OCI-LY7 (cell line): ENCODE measurements at regions of chr14 and their contacts with region 1.

Region 1: GRCh38 chr14:60276342-60276741 is 27.3 kb downstream of the PPM1A start:
- DNase-seq: no peak
- H3K4me3 ChIP-seq: no peak overlapping the region
- H3K27ac ChIP-seq: no peak overlapping the region
- H3K4me1 ChIP-seq: peaks cover 24% of the 10 kb centered on the region
- CTCF ChIP-seq: no peak

Region 2: DNA sequence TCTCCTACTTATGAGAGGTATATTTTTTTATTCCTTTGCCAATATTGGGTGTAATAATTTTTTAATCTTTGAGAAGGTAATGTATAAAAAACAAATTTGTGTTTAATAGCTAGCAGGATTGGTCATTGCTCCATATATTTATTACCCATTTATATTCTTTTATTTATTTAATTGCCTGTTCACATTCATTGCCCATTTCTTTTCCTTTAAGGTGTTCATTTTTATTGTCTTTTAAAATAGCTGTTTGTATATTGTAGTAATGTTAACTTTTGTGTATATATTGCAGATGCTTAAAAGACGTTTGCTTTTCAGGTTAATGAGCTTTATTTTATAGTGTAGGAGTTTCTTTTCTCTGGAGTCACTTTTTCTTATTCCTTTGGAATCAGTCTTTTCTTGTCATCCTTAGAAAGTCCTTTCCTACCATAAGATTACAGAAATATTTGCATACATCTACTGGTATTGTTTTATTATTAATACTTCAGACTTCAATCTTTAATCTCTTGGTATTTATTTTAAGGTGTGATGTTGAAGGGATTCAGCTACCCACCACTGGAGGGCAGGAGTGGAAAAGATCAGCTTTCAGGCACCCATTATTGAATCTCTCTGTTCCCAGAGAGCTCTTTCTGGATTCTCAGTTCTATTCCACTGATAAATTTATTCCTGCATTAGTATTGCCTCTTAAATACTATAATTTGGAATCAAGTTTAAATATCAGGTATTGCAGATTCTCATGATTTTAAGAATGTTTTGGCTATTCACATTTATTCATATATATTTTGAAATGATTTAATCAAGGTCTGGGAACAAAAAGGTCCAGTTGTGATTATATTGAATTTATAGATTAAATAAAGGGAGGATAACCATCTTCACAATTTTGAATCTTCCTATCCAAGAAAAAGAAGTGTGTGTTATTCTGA is 10.1 kb before region 1 on chr14:
- CTCF ChIA-PET with region 1: no interaction called
- POLR2A ChIA-PET with region 1: interaction called, 10 read pairs
- intact Hi-C with region 1: no loop called
- DNase-seq: peak; percentile 48
- H3K4me3 ChIP-seq: no peak overlapping the region
- H3K27ac ChIP-seq: no peak overlapping the region
- H3K4me1 ChIP-seq: no peaks in the 10 kb centered on the region
- CTCF ChIP-seq: peak; percentile 92

Region 3: GRCh38 chr14:60294411-60295069 is 18.2 kb after region 1 on chr14:
- CTCF ChIA-PET with region 1: no interaction called
- POLR2A ChIA-PET with region 1: no interaction called
- intact Hi-C with region 1: no loop called
- DNase-seq: no peak
- H3K4me3 ChIP-seq: no peak overlapping the region
- H3K27ac ChIP-seq: no peak overlapping the region
- H3K4me1 ChIP-seq: no peaks in the 10 kb centered on the region
- CTCF ChIP-seq: no peak

Region 4: DNA sequence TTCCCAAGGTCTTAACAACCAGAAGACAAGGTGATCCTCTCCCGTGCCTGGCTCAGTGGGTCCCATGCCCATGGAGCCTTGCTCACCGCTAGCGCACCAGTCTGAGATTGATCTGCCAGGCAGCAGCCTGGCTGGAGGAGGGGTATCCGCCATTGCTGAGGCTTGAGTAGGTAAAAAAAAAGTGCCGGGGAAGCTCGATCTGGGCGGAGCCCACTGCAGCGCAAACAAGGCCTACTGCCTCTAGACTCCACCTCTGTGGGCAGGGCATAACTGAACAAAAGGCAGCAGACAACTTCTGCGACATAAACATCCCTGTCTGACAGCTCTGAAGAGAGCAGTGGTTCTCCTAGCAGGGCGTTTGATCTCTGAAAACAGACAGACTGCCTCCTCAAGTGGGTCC is 105.6 kb after region 1 on chr14:
- CTCF ChIA-PET with region 1: no interaction called
- POLR2A ChIA-PET with region 1: no interaction called
- intact Hi-C with region 1: no loop called
- DNase-seq: no peak
- H3K4me3 ChIP-seq: no peak overlapping the region
- H3K27ac ChIP-seq: no peak overlapping the region
- H3K4me1 ChIP-seq: no peaks in the 10 kb centered on the region
- CTCF ChIP-seq: no peak

Region 5: DNA sequence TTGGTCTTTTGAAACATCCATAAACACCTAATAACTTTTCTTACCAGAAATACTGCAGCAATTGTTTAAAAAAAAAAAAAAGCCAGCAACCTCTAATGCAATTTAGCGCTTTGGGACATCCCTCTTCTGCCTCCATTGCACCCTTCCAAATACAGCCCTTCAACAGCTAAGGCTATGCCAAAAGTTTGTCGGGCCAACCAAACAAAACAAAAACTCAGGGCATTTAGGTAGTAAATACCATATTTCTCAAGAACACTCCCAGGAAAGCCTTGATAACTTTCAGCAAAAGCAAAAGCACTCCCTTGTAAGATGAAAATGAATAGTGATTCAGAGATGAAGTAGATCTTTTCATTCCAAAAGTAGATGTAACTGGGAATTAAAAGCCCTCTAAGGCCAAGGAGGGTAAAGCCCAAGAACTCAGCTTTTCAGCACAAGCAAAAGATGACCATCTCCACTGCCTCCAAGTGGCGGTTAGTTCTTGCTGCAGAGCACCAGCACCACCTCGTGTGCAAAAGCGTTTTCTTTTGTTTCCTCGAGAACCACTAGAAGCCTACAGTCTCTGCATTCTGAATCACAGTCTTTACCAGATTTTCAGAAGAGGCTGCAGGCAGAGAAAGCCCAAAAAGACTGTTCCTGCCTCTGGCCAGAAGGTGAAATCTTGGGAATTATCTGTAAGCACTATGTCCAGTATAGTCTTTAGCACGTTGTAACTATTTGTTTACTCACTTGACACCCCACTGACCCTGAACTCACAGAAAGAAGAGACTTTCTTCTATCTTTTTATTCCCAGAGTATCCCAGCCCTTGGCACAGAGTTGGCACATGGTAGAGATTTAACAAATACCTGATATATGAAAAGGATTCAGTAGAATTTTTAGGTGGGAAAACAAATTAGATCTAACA is 285.8 kb after region 1 on chr14:
- CTCF ChIA-PET with region 1: no interaction called
- POLR2A ChIA-PET with region 1: no interaction called
- intact Hi-C with region 1: loop called (anchors 5 kb)
- DNase-seq: peak; percentile 90
- H3K4me3 ChIP-seq: no peak overlapping the region
- H3K27ac ChIP-seq: no peak overlapping the region
- H3K4me1 ChIP-seq: peaks cover 78% of the 10 kb centered on the region
- CTCF ChIP-seq: peak; percentile 97